ENCODE measurements at regions of chr2 and their contacts with region 1.

Region 1: GRCh38 chr2:79041032-79041448 is 15.5 kb downstream of the REG3G start:
- DNase-seq: peak; percentile 23

Region 2: GRCh38 chr2:79219383-79219988 is 178.4 kb after region 1 on chr2:
- CTCF ChIA-PET with region 1: interaction called, 11 read pairs
- POLR2A ChIA-PET with region 1: no interaction called
- DNase-seq: peak; percentile 40

Measured in HEK293T (cell line).